MCF 10A (cell line): ENCODE measurements at regions of chr1 and their contacts with region 1.

Region 1: GRCh38 chr1:231211005-231211857 is 29.8 kb upstream of the GNPAT start:
- DNase-seq: peak; percentile 94
- H3K4me3 Mint-ChIP-seq: peak overlapping the region; percentile 77
- H3K27ac Mint-ChIP-seq: peak overlapping the region; percentile 70
- H3K4me1 Mint-ChIP-seq: peaks cover 10% of the 10 kb centered on the region
- H3K27me3 Mint-ChIP-seq: no peaks in the 10 kb centered on the region
- CTCF ChIP-seq: peak; percentile 100

Region 2: DNA sequence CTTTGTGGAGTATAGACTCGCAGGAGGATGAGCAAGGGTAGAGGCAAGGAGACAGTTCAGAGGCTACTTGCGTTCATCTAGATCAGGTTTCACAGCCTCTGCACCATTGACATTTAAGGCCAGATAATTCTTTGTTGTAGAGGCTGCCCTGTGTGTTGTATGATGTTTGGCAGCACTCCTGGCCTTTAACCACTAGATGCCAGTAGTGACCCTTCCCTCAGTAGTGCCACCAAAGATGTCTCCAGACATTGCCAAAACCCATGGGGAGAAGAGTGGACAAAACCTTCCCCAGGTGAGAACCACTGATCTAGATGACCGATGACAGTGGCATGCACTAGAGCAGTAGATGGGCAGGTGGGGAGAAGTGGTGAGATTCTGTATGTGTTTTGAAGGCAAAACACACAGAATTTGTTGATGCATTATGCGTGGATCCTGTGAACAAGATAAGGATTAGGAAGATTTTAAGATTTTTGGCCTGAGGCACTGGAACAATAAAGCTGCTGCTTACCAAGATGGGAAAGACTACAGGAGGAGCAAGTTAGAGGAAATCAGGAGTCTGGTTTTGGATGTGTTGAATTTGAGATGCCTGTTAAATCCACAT is 578.9 kb before region 1 on chr1:
- CTCF ChIA-PET with region 1: interaction called, 3 read pairs
- POLR2A ChIA-PET with region 1: no interaction called
- intact Hi-C with region 1: loop called (anchors 1 kb)
- DNase-seq: peak; percentile 88
- H3K4me3 Mint-ChIP-seq: no peak overlapping the region
- H3K27ac Mint-ChIP-seq: no peak overlapping the region
- H3K4me1 Mint-ChIP-seq: peaks cover 4% of the 10 kb centered on the region
- H3K27me3 Mint-ChIP-seq: peaks cover 17% of the 10 kb centered on the region
- CTCF ChIP-seq: peak; percentile 84

Region 3: DNA sequence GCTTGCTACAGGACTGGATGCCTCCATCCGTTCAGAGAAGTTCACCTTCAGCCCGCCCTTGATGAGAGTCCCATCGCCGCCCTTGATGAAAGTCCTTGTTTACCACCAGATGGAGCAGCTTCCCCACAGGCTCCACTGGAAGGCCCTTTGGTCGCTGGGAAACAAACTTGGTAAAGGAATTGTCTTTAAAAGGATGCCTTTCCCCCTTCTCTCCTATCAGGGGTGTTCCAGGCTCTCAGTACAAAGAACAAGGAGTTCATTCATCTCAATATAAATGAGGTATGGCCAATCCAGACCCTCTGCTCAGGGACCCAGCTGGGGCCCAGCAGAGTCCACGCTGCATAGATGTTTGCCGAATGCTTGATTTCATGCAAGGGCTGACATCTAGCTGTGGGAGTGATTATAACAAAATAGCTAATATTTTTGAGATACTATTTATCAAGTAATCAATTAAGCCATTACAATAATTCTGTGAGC is 413.3 kb before region 1 on chr1:
- CTCF ChIA-PET with region 1: interaction called, 69 read pairs
- POLR2A ChIA-PET with region 1: no interaction called
- intact Hi-C with region 1: loop called (anchors 1 kb)
- DNase-seq: peak; percentile 83
- H3K4me3 Mint-ChIP-seq: no peak overlapping the region
- H3K27ac Mint-ChIP-seq: no peak overlapping the region
- H3K4me1 Mint-ChIP-seq: no peaks in the 10 kb centered on the region
- H3K27me3 Mint-ChIP-seq: peaks cover 34% of the 10 kb centered on the region
- CTCF ChIP-seq: peak; percentile 70

Region 4: GRCh38 chr1:230972855-230973271 is 238.4 kb before region 1 on chr1:
- CTCF ChIA-PET with region 1: interaction called, 11 read pairs
- POLR2A ChIA-PET with region 1: interaction called, 15 read pairs
- intact Hi-C with region 1: loop called (anchors 2 kb)
- DNase-seq: no peak
- H3K4me3 Mint-ChIP-seq: no peak overlapping the region
- H3K27ac Mint-ChIP-seq: no peak overlapping the region
- H3K4me1 Mint-ChIP-seq: peaks cover 7% of the 10 kb centered on the region
- H3K27me3 Mint-ChIP-seq: no peaks in the 10 kb centered on the region
- CTCF ChIP-seq: no peak

Region 5: GRCh38 chr1:231091831-231092301 is 119.4 kb before region 1 on chr1:
- CTCF ChIA-PET with region 1: interaction called, 6 read pairs
- POLR2A ChIA-PET with region 1: no interaction called
- intact Hi-C with region 1: loop called (anchors 2 kb)
- DNase-seq: peak; percentile 79
- H3K4me3 Mint-ChIP-seq: no peak overlapping the region
- H3K27ac Mint-ChIP-seq: no peak overlapping the region
- H3K4me1 Mint-ChIP-seq: peaks cover 4% of the 10 kb centered on the region
- H3K27me3 Mint-ChIP-seq: peaks cover 76% of the 10 kb centered on the region
- CTCF ChIP-seq: peak; percentile 87

Region 6: GRCh38 chr1:231226156-231226555 is 14.9 kb after region 1 on chr1:
- CTCF ChIA-PET with region 1: interaction called, 11 read pairs
- POLR2A ChIA-PET with region 1: interaction called, 8 read pairs
- intact Hi-C with region 1: no loop called
- DNase-seq: no peak
- H3K4me3 Mint-ChIP-seq: no peak overlapping the region
- H3K27ac Mint-ChIP-seq: no peak overlapping the region
- H3K4me1 Mint-ChIP-seq: no peaks in the 10 kb centered on the region
- H3K27me3 Mint-ChIP-seq: no peaks in the 10 kb centered on the region
- CTCF ChIP-seq: no peak